CD4-positive, alpha-beta T cell (primary cell): ENCODE measurements at regions of chr3 and their contacts with region 1.

Region 1: DNA sequence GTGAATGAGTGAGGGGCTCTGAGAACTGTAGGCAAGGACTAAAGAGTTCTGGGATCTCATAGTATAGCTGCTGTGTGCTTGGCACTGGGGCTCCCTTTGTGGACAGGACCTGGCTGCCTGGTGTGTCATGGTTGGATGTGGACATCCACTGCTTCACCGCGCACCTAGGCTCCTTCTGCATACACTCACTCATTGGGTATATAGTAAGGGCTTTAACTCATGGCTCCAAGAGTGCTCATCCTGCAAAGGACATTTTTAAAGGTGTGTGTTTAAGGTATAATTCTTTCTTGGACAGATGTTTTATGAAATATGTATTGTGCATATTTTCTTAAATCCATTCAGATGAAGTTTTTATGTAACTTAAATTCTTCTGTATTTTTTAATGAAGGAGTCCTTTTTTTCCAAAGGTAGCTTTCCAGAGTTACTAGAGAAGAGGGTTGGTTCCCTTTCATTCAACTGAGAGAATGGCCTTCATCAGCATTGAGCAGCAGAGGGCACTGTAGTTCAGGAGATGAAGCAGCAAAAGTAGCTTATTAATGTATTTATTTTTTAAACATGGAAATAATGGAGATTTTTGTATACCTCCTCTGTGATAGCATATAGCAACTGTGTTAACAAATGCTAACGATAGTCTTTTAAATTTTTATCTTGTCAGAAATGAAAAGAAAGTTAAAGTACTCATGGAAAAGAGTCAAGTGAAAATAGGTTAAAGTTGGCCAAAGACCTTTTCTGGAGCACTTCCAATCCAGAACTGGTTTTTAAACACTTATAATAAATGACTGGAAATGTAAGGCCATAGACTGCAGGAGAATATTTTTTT is 25.2 kb downstream of the OXNAD1 start:
- DNase-seq: peak in 11 of 14 experiments; percentile 35 to 80 (median 58)
- ATAC-seq: peak; percentile 12
- H3K4me3 ChIP-seq: peak overlapping the region; percentile 91
- H3K4me3 Mint-ChIP-seq: peak overlapping the region; percentile 95
- H3K27ac ChIP-seq: peak overlapping the region; percentile 65 to 88
- H3K27ac Mint-ChIP-seq: peak overlapping the region; percentile 92
- H3K4me1 ChIP-seq: peaks cover 46% of the 10 kb centered on the region
- H3K4me1 Mint-ChIP-seq: peaks cover 73% of the 10 kb centered on the region
- H3K27me3 ChIP-seq: no peaks in the 10 kb centered on the region
- H3K27me3 Mint-ChIP-seq: no peaks in the 10 kb centered on the region
- CTCF ChIP-seq: peak; percentile 97

Region 2: GRCh38 chr3:16090024-16090423 is 200.2 kb before region 1 on chr3:
- CTCF ChIA-PET with region 1: no interaction called
- POLR2A ChIA-PET with region 1: no interaction called
- intact Hi-C with region 1: no loop called
- DNase-seq: no peak
- ATAC-seq: no peak
- H3K4me3 ChIP-seq: no peak overlapping the region
- H3K4me3 Mint-ChIP-seq: no peak overlapping the region
- H3K27ac ChIP-seq: no peak overlapping the region
- H3K27ac Mint-ChIP-seq: no peak overlapping the region
- H3K4me1 ChIP-seq: no peaks in the 10 kb centered on the region
- H3K4me1 Mint-ChIP-seq: no peaks in the 10 kb centered on the region
- H3K27me3 ChIP-seq: peaks cover 0 to 5% of the 10 kb centered on the region in 2 experiments
- H3K27me3 Mint-ChIP-seq: no peaks in the 10 kb centered on the region
- CTCF ChIP-seq: no peak

Region 3: GRCh38 chr3:16203031-16203430 is 87.2 kb before region 1 on chr3:
- CTCF ChIA-PET with region 1: no interaction called
- POLR2A ChIA-PET with region 1: no interaction called
- intact Hi-C with region 1: no loop called
- DNase-seq: no peak
- ATAC-seq: no peak
- H3K4me3 ChIP-seq: no peak overlapping the region
- H3K4me3 Mint-ChIP-seq: no peak overlapping the region
- H3K27ac ChIP-seq: no peak overlapping the region
- H3K27ac Mint-ChIP-seq: no peak overlapping the region
- H3K4me1 ChIP-seq: no peaks in the 10 kb centered on the region
- H3K4me1 Mint-ChIP-seq: no peaks in the 10 kb centered on the region
- H3K27me3 ChIP-seq: no peaks in the 10 kb centered on the region
- H3K27me3 Mint-ChIP-seq: peaks cover 11% of the 10 kb centered on the region
- CTCF ChIP-seq: no peak

Region 4: GRCh38 chr3:16300881-16301359 is 10.7 kb after region 1 on chr3:
- CTCF ChIA-PET with region 1: interaction called, 56 read pairs
- POLR2A ChIA-PET with region 1: interaction called, 174 read pairs
- intact Hi-C with region 1: loop called in 1 of 2 experiments (anchors 1 kb)
- DNase-seq: peak; percentile 43 to 90 (median 52)
- ATAC-seq: peak; percentile 73
- H3K4me3 ChIP-seq: peak overlapping the region; percentile 33
- H3K4me3 Mint-ChIP-seq: peak overlapping the region; percentile 91
- H3K27ac ChIP-seq: peak overlapping the region; percentile 63 to 81
- H3K27ac Mint-ChIP-seq: peak overlapping the region; percentile 96
- H3K4me1 ChIP-seq: peaks cover 71% of the 10 kb centered on the region
- H3K4me1 Mint-ChIP-seq: peaks cover 97% of the 10 kb centered on the region
- H3K27me3 ChIP-seq: no peaks in the 10 kb centered on the region
- H3K27me3 Mint-ChIP-seq: no peaks in the 10 kb centered on the region
- CTCF ChIP-seq: no peak

Region 5: DNA sequence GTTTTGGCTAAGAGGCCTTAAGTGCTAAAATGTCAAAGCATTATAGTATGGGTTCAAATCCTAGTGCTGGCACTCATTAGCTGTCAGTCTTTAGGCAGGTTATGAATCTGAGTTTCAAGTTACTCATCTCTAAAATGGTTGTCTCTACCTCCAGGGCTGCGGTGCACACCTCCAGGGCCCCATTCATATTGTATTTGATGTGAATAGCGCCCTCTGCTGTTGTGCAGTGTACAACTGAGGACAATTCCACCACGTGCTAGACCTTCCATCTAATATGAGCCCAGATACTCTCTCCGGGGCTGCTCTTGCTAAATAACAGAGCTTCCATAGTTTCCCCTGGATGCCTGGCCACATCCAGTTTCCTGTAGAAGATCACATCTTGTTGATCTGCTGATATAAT is 29.1 kb after region 1 on chr3:
- CTCF ChIA-PET with region 1: interaction called, 208 read pairs
- POLR2A ChIA-PET with region 1: interaction called, 211 read pairs
- intact Hi-C with region 1: loop called (anchors 1 kb)
- DNase-seq: peak; percentile 65 to 91 (median 75)
- ATAC-seq: peak; percentile 85
- H3K4me3 ChIP-seq: no peak overlapping the region
- H3K4me3 Mint-ChIP-seq: peak overlapping the region; percentile 23
- H3K27ac ChIP-seq: peak overlapping the region; percentile 42 to 48
- H3K27ac Mint-ChIP-seq: peak overlapping the region; percentile 94
- H3K4me1 ChIP-seq: peaks cover 68% of the 10 kb centered on the region
- H3K4me1 Mint-ChIP-seq: peaks cover 72% of the 10 kb centered on the region
- H3K27me3 ChIP-seq: no peaks in the 10 kb centered on the region
- H3K27me3 Mint-ChIP-seq: no peaks in the 10 kb centered on the region
- CTCF ChIP-seq: peak; percentile 72

Region 6: DNA sequence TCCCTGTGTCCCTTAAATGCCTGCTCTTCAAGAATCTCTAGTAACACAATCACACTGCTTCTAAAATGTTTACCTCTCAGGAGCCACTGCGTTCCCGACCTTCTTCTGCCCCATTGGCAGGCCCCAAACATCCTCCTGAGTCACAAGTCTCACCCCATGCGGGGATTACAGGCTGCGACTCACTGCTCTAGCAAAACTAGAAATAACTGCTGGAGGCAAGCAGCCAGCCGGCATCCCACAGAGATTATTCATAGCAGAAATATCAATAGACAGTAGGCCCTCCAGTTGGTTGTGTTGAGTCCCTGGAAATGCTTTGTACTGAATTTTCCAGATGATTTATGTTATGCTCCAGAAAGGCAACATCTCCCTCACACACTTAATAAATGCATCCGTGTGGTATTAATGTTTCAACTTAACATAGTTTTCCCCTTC is 158.4 kb after region 1 on chr3:
- CTCF ChIA-PET with region 1: no interaction called
- POLR2A ChIA-PET with region 1: no interaction called
- intact Hi-C with region 1: no loop called
- DNase-seq: peak in 2 of 14 experiments; percentile 17 to 37
- ATAC-seq: no peak
- H3K4me3 ChIP-seq: no peak overlapping the region
- H3K4me3 Mint-ChIP-seq: no peak overlapping the region
- H3K27ac ChIP-seq: no peak overlapping the region
- H3K27ac Mint-ChIP-seq: no peak overlapping the region
- H3K4me1 ChIP-seq: no peaks in the 10 kb centered on the region
- H3K4me1 Mint-ChIP-seq: peaks cover 46% of the 10 kb centered on the region
- H3K27me3 ChIP-seq: no peaks in the 10 kb centered on the region
- H3K27me3 Mint-ChIP-seq: no peaks in the 10 kb centered on the region
- CTCF ChIP-seq: no peak

Region 7: GRCh38 chr3:16529264-16529663 is 239.0 kb after region 1 on chr3:
- CTCF ChIA-PET with region 1: interaction called, 7 read pairs
- POLR2A ChIA-PET with region 1: interaction called, 5 read pairs
- intact Hi-C with region 1: loop called (anchors 1 to 5 kb)
- DNase-seq: peak in 3 of 14 experiments; percentile 47 to 53 (median 50)
- ATAC-seq: peak; percentile 89
- H3K4me3 ChIP-seq: no peak overlapping the region
- H3K4me3 Mint-ChIP-seq: no peak overlapping the region
- H3K27ac ChIP-seq: no peak overlapping the region
- H3K27ac Mint-ChIP-seq: no peak overlapping the region
- H3K4me1 ChIP-seq: no peaks in the 10 kb centered on the region
- H3K4me1 Mint-ChIP-seq: peaks cover 12% of the 10 kb centered on the region
- H3K27me3 ChIP-seq: no peaks in the 10 kb centered on the region
- H3K27me3 Mint-ChIP-seq: no peaks in the 10 kb centered on the region
- CTCF ChIP-seq: peak; percentile 51

Region 8: DNA sequence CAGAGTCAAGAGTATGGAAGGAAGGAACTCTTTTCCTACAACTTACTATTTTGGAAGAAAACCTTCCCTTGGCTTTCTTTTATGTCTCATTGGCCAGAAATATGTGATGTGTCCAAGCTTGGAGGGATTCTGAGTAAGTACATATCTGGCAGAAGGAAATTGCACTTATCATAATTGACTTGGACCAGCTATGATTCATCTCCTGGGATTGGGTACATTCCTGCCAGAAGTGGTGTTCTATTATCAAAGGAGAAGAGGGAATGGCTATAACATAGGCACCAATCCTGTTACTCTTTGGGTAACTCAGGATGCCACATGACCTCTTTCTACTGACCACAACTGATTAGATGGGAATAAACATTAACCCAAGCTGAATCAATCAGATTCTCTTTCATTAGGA is 328.5 kb after region 1 on chr3:
- CTCF ChIA-PET with region 1: no interaction called
- POLR2A ChIA-PET with region 1: no interaction called
- intact Hi-C with region 1: no loop called
- DNase-seq: no peak
- ATAC-seq: no peak
- H3K4me3 ChIP-seq: no peak overlapping the region
- H3K4me3 Mint-ChIP-seq: no peak overlapping the region
- H3K27ac ChIP-seq: no peak overlapping the region
- H3K27ac Mint-ChIP-seq: no peak overlapping the region
- H3K4me1 ChIP-seq: no peaks in the 10 kb centered on the region
- H3K4me1 Mint-ChIP-seq: no peaks in the 10 kb centered on the region
- H3K27me3 ChIP-seq: peaks cover 0 to 3% of the 10 kb centered on the region in 2 experiments
- H3K27me3 Mint-ChIP-seq: no peaks in the 10 kb centered on the region
- CTCF ChIP-seq: no peak

Region 9: GRCh38 chr3:16842272-16843270 is 552.4 kb after region 1 on chr3:
- CTCF ChIA-PET with region 1: no interaction called
- POLR2A ChIA-PET with region 1: interaction called, 4 read pairs
- intact Hi-C with region 1: loop called in 1 of 2 experiments (anchors 10 kb)
- DNase-seq: peak; percentile 56 to 92 (median 71)
- ATAC-seq: peak; percentile 87
- H3K4me3 ChIP-seq: peak overlapping the region; percentile 50
- H3K4me3 Mint-ChIP-seq: peak overlapping the region; percentile 88
- H3K27ac ChIP-seq: peak overlapping the region; percentile 68 to 92
- H3K27ac Mint-ChIP-seq: peak overlapping the region; percentile 97
- H3K4me1 ChIP-seq: peaks cover 61% of the 10 kb centered on the region
- H3K4me1 Mint-ChIP-seq: peaks cover 89% of the 10 kb centered on the region
- H3K27me3 ChIP-seq: no peaks in the 10 kb centered on the region
- H3K27me3 Mint-ChIP-seq: no peaks in the 10 kb centered on the region
- CTCF ChIP-seq: no peak